ENCODE measurements at regions of chr11 and their contacts with region 1.

Region 1: GRCh38 chr11:123020968-123021367 is 39.3 kb upstream of the BSX start:
- DNase-seq: peak in 6 of 7 donors; percentile 20 to 63 (median 30)
- H3K4me3 ChIP-seq: no peak overlapping the region
- H3K27ac ChIP-seq: no peak overlapping the region
- H3K4me1 ChIP-seq: no peaks in the 10 kb centered on the region
- H3K27me3 ChIP-seq: peaks cover 8% of the 10 kb centered on the region
- CTCF ChIP-seq: peak; percentile 18 to 45 (median 32)
- POLR2A ChIP-seq: no peak

Region 2: DNA sequence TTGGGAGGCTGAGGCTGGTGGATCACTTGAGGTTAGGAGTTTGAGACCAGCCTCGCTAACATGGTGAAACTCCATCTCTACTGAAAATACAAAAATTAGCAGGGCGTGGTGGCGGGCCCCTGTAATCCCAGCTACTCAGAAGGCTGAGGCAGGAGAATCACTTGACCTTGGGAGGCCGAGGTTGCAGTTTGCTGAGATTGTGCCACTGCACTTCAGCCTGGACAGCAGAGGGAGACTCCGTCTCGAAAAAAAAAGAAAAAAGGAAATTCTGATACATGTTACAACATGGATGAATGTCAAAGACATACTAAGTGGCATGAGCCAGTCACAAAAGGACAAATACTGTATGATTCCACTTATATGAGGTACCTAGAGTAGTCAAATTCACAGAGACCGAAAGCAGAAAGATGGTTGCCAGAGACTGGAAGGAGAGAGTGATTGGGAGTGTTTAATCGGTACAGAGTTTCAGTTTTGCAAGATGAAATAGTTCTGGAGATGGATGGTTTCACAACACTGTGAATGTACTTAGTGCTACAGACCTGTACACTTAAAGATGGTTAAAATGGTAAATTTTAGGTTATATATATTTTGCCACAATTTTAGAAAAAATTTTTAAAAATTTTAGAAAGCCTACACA is 997.2 kb before region 1 on chr11:
- intact Hi-C with region 1: no loop called
- DNase-seq: no peak
- H3K4me3 ChIP-seq: no peak overlapping the region
- H3K27ac ChIP-seq: no peak overlapping the region
- H3K4me1 ChIP-seq: no peaks in the 10 kb centered on the region
- H3K27me3 ChIP-seq: no peaks in the 10 kb centered on the region
- CTCF ChIP-seq: peak in 2 of 6 experiments; percentile 16 to 21
- POLR2A ChIP-seq: no peak

Region 3: DNA sequence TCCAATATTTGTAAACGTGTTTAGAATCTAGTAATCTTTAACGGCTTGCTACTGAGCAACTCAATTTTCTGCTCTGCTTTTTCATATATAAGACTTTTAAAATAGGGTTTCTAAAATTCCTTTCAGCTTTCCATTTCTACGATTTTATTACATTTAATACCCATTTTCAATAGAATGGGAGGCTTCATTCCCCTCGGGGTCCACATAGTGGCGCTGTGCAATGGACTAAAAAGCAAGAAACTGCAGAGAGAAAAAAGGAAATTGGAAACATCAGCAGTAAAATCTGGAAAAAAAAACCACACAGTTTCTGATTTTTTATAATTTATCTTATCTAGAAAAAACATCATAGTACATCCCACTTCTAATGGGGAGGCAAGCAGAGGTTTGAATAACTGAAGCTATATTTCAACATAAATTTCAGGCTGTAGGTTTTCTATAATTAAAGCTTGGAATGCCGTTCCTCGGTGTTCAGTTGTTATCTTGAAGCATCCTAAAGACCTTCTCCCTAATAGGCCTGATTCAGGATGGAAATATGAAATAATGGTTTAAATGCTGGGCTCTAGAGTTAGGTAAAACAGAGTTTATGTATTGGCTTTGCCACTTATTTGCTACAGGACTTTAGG is 157.2 kb before region 1 on chr11:
- intact Hi-C with region 1: loop called in 1 of 2 experiments (anchors 5 kb)
- DNase-seq: peak; percentile 25 to 76 (median 50)
- H3K4me3 ChIP-seq: peak overlapping the region in 1 of 4 donors; percentile 27
- H3K27ac ChIP-seq: no peak overlapping the region
- H3K4me1 ChIP-seq: no peaks in the 10 kb centered on the region
- H3K27me3 ChIP-seq: peaks cover 6% of the 10 kb centered on the region
- CTCF ChIP-seq: peak; percentile 64 to 91 (median 74)
- POLR2A ChIP-seq: no peak

Region 4: GRCh38 chr11:122910775-122911174 is 110.2 kb before region 1 on chr11:
- intact Hi-C with region 1: loop called in 1 of 2 experiments (anchors 5 kb)
- DNase-seq: peak in 1 of 7 donors; percentile 6
- H3K4me3 ChIP-seq: no peak overlapping the region
- H3K27ac ChIP-seq: no peak overlapping the region
- H3K4me1 ChIP-seq: no peaks in the 10 kb centered on the region
- H3K27me3 ChIP-seq: no peaks in the 10 kb centered on the region
- CTCF ChIP-seq: peak in 5 of 6 experiments; percentile 23 to 43 (median 38)
- POLR2A ChIP-seq: no peak

Region 5: DNA sequence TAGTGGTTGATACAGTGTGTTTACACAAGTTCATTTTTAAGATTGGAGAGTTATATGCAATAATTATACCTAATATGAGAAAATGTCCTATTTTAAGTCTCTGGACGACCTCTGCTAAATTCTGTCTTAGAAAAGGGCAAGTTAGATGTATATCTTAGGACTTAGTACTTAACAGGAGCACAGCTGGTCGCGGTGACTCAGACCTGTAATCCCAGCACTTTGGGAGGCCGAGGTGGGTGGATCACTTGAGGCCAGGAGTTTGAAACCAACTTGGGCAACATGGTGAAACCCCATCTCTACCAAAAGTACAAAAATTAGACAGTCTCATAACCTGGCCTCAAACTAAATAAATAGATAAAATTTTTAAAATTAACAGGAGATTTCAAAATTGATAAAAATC is 66.5 kb before region 1 on chr11:
- intact Hi-C with region 1: no loop called
- DNase-seq: no peak
- H3K4me3 ChIP-seq: no peak overlapping the region
- H3K27ac ChIP-seq: no peak overlapping the region
- H3K4me1 ChIP-seq: no peaks in the 10 kb centered on the region
- H3K27me3 ChIP-seq: no peaks in the 10 kb centered on the region
- CTCF ChIP-seq: no peak
- POLR2A ChIP-seq: no peak

Measured in adrenal gland (tissue), 19 donors.